ENCODE measurements at regions of chr18 and their contacts with region 1.

Region 1: DNA sequence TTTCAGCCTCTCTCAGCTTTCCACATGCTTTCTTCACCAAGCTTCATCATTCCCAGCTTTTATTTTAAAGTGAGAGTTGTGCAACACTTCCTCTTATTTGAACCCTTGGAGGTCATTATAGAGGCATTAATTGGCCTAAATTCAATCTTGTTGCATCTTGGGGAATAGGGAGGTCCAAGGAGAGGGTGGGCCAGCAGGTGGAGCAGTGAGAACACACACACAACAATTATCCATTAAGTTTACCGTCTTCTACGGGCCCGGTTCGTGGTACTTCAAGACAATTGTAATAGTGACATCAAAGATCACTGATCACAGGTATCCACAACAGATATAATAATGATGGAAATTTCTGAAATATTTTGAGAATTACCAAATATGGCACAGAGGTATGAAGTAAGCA is 457.2 kb upstream of the SMIM21 start:
- DNase-seq: peak; percentile 24
- ATAC-seq: no peak
- H3K4me3 Mint-ChIP-seq: no peak overlapping the region
- H3K27ac Mint-ChIP-seq: no peak overlapping the region
- H3K4me1 Mint-ChIP-seq: no peaks in the 10 kb centered on the region
- H3K27me3 Mint-ChIP-seq: no peaks in the 10 kb centered on the region

Region 2: DNA sequence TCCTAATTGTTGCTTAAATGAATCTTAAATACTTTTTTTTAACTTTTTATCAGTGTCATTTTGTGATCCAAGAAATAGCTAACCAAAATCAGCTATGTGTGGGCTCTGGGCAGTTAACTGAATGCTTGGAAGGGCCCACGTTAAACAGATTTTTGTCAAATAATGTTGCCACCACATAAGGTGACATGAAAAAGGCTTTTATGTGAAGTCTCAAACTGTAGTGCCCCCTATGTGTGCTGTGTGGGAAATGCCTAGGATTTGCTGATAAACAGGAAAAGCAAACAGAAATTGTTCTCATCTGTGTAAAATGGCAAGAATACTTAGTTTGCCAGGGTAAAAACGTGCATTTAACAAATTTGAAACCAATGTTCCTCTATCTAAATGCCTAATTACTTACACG is 368.2 kb after region 1 on chr18:
- CTCF ChIA-PET with region 1: interaction called, 3 read pairs
- POLR2A ChIA-PET with region 1: no interaction called
- intact Hi-C with region 1: loop called in 1 of 2 experiments (anchors 10 kb)
- DNase-seq: peak; percentile 32
- ATAC-seq: no peak
- H3K4me3 Mint-ChIP-seq: no peak overlapping the region
- H3K27ac Mint-ChIP-seq: no peak overlapping the region
- H3K4me1 Mint-ChIP-seq: no peaks in the 10 kb centered on the region
- H3K27me3 Mint-ChIP-seq: peaks cover 4% of the 10 kb centered on the region

Region 3: DNA sequence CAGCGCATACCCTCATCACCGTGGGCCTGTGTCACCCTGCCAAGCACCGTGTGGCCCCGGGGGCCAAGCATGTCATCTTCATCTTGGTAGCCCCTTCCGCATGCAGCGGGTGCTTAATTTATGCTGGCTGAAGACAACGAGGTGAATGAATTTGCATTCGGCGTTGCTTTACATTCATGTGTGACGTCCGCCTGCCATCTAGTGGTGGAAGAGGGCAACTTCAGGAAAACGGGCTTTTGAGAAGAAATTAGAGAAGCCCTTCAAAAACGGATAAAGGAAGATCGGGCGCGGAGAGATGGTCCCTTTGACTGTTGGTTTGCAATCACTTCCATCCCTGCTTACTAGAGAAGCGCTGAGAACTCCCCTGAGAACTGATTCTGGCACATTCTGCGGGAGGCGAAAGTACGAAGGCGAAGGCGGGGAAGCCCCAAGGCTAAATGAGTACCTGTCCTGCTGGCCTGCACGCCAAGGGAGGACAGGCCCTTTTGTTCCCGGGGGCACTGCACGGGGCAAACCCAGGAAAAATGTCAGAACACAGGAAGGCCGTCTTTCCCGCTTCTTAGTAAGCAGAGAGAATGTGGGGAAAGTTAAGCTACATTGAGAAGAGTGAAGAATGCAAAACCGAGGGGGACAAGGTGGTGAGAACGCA is 464.5 kb after region 1 on chr18:
- CTCF ChIA-PET with region 1: no interaction called
- POLR2A ChIA-PET with region 1: no interaction called
- intact Hi-C with region 1: loop called in 1 of 2 experiments (anchors 10 kb)
- DNase-seq: peak; percentile 82
- ATAC-seq: peak; percentile 63
- H3K4me3 Mint-ChIP-seq: no peak overlapping the region
- H3K27ac Mint-ChIP-seq: no peak overlapping the region
- H3K4me1 Mint-ChIP-seq: peaks cover 8% of the 10 kb centered on the region
- H3K27me3 Mint-ChIP-seq: peaks cover 2% of the 10 kb centered on the region

Measured in activated CD4-positive, alpha-beta T cell treated with anti-CD3 and anti-CD28 coated beads for 36 hours (primary cell).